ENCODE measurements at regions of chr15 and their contacts with region 1.

Region 1: GRCh38 chr15:36632196-36632595 is 52.8 kb downstream of the CDIN1 start:
- DNase-seq: peak; percentile 75
- ATAC-seq: peak; percentile 81
- H3K4me3 ChIP-seq: no peak overlapping the region
- H3K27ac ChIP-seq: no peak overlapping the region
- H3K4me1 ChIP-seq: peaks cover 4% of the 10 kb centered on the region
- H3K27me3 ChIP-seq: no peaks in the 10 kb centered on the region
- CTCF ChIP-seq: no peak
- POLR2A ChIP-seq: no peak
- RAD21 ChIP-seq: no peak

Region 2: DNA sequence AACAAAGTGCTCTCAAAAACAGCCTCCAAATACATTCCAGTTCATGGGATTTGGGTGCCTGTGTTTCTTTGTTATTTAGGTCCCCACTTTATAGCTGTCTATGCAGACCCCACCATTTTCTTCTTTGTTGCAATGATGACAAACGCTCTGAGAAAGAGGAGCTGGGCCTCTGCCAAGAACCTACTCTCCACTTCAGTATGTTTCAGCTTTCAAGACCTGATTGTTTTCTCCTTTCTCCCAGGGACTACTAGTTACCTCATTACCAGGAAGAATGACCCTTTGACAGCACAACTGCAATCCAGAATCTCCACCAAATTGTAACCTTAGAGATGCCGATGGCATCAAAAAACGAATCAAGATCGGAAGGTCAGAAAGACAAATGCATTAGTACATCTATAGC is 231.4 kb after region 1 on chr15:
- CTCF ChIA-PET with region 1: no interaction called
- POLR2A ChIA-PET with region 1: no interaction called
- dilution Hi-C with region 1: no loop called
- in situ Hi-C with region 1: no loop called
- intact Hi-C with region 1: loop called (anchors 5 kb)
- DNase-seq: peak; percentile 56
- ATAC-seq: no peak
- H3K4me3 ChIP-seq: no peak overlapping the region
- H3K27ac ChIP-seq: no peak overlapping the region
- H3K4me1 ChIP-seq: peaks cover 2% of the 10 kb centered on the region; the same call in 1 of the 2 replicates
- H3K27me3 ChIP-seq: no peaks in the 10 kb centered on the region
- CTCF ChIP-seq: no peak
- POLR2A ChIP-seq: no peak
- RAD21 ChIP-seq: no peak